ENCODE measurements at regions of chr11 and their contacts with region 1.

Region 1: DNA sequence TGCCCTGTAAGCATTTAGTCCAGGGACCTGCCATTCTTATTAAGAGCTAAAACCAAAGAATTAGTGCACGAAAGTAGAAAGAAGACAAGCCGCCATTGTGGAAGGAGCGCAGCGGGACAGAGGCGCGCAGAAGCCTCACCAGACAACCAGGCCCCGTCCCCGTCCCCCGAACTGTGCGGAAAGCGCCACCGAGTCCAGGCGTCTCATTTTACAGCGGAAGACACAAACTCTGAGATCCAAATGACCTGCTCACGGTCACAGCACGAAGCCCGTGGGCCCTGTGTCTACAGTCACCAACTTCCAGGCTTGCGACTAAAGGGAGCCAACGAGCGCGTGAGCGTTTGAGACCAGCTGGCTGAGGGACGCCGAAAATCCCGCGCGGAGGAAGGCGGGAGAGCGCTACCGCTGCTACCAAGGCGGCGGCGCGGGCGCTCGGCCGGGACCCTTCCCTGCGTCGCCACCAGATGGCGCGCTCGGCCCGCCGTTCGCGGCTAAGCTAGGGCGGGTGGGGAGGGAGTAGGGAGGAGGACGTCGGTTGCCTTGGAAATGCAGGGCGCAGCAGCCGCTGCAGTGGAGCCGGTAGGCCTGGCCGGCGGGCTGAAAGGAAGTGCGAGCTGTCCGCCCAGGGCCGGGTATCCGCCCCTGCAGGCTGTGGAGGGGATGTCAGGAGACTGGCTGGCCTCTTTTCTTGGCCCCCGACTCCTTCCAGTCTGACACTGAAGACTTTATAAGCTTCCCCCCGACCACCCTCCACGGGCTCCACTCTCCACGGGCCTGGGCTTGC is 434 bp upstream of the CCDC83 start:
- DNase-seq: peak; percentile 88
- H3K4me3 Mint-ChIP-seq: peak overlapping the region; percentile 72
- H3K27ac Mint-ChIP-seq: peak overlapping the region; percentile 74
- H3K4me1 Mint-ChIP-seq: peaks cover 8% of the 10 kb centered on the region
- H3K27me3 Mint-ChIP-seq: no peaks in the 10 kb centered on the region
- CTCF ChIP-seq: peak; percentile 66

Region 2: DNA sequence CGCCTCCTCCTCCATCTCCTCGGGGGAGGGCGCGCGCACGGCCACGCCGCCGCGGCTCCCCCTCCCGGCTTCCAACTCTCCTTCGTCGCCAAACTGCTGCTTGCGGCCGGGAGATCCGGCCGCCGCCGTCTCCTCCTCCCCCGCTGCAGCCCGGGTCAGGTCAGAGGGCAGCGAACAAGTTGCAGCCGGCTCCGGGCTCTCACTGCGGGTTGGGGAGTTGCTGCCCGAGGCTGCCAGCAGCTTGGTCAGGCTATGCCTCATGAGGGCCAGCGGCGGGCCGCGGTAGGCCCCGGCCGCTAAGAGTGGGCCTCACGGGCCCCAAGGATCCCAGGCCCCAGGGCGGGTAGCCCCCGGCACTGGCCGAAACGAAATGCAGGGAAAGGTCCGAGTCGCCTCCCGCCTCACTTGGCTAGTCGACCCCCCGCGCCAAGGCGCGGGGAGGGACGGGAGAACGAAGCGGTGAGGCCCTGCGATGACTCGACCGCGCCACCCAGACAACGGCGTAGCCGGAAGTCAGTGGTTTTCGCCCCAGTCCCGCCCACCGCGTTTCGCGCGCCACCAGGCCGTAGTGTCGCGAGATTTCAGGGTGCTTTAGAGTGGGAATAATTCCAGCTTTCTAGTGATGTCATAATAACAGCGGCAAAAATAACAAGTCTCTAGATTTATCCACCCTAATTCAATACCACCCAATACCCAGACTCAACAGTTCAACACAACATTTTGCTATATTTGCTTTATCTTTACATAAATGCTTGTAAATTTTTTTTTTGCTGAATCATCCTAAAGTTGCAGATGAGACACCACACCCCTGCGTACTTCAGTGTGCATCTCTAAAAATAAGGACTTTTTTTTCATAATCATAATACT is 189.9 kb before region 1 on chr11 and contains the start of gene CREBZF:
- CTCF ChIA-PET with region 1: no interaction called
- intact Hi-C with region 1: loop called (anchors 1 kb)
- DNase-seq: peak; percentile 91
- H3K4me3 Mint-ChIP-seq: peak within 1 kb of the TSS; percentile 87
- H3K27ac Mint-ChIP-seq: peak within 1 kb of the TSS; percentile 76
- H3K4me1 Mint-ChIP-seq: no peaks in the 10 kb centered on the region
- H3K27me3 Mint-ChIP-seq: no peaks in the 10 kb centered on the region
- CTCF ChIP-seq: no peak
- total RNA-seq, gene CREBZF: 31.0 and 31.2 TPM in 2 replicates

Region 3: DNA sequence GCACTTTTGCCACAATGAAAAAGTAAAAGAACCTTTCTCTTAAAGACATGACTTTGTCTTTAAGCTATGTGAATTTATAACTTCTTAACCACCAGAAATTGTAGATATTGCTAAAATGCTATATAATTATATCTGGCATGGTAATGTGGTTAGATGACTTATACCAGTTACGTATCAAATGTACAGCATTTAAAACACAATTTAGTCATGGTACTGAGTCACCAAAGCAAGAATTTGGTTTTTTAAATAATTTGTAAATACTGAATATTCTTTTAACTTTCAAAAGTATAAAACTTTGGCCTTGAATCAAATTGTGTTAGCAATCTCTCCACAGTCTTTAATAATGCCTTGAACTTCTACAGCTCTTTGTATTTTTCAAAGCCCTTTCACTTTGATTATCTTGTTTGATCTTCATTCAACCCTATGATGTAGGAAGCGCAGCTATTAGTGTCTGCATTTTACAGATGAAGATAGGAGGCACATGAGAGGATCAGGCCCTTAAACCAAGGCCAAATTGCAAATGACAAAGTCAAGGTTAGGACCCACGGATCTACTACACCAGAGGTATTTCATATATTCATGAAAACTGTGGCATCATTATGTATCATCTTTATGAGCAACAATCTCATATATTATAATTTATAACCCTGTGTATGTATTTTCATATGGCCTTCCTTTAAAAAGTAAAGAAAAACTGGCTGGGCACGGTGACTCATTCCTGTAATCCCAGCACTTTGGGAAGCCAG is 39.4 kb before region 1 on chr11:
- CTCF ChIA-PET with region 1: no interaction called
- intact Hi-C with region 1: no loop called
- DNase-seq: no peak
- H3K4me3 Mint-ChIP-seq: no peak overlapping the region
- H3K27ac Mint-ChIP-seq: no peak overlapping the region
- H3K4me1 Mint-ChIP-seq: peaks cover 9% of the 10 kb centered on the region
- H3K27me3 Mint-ChIP-seq: no peaks in the 10 kb centered on the region
- CTCF ChIP-seq: no peak

Region 4: GRCh38 chr11:85947431-85948272 is 92.9 kb after region 1 on chr11:
- CTCF ChIA-PET with region 1: interaction called, 3 read pairs
- intact Hi-C with region 1: loop called (anchors 5 kb)
- DNase-seq: peak; percentile 43
- H3K4me3 Mint-ChIP-seq: no peak overlapping the region
- H3K27ac Mint-ChIP-seq: peak overlapping the region; percentile 56
- H3K4me1 Mint-ChIP-seq: peaks cover 39% of the 10 kb centered on the region
- H3K27me3 Mint-ChIP-seq: no peaks in the 10 kb centered on the region
- CTCF ChIP-seq: no peak

Region 5: GRCh38 chr11:86041975-86042378 is 187.2 kb after region 1 on chr11:
- CTCF ChIA-PET with region 1: no interaction called
- intact Hi-C with region 1: no loop called
- DNase-seq: peak; percentile 71
- H3K4me3 Mint-ChIP-seq: no peak overlapping the region
- H3K27ac Mint-ChIP-seq: no peak overlapping the region
- H3K4me1 Mint-ChIP-seq: peaks cover 32% of the 10 kb centered on the region
- H3K27me3 Mint-ChIP-seq: no peaks in the 10 kb centered on the region
- CTCF ChIP-seq: peak; percentile 77

Region 6: DNA sequence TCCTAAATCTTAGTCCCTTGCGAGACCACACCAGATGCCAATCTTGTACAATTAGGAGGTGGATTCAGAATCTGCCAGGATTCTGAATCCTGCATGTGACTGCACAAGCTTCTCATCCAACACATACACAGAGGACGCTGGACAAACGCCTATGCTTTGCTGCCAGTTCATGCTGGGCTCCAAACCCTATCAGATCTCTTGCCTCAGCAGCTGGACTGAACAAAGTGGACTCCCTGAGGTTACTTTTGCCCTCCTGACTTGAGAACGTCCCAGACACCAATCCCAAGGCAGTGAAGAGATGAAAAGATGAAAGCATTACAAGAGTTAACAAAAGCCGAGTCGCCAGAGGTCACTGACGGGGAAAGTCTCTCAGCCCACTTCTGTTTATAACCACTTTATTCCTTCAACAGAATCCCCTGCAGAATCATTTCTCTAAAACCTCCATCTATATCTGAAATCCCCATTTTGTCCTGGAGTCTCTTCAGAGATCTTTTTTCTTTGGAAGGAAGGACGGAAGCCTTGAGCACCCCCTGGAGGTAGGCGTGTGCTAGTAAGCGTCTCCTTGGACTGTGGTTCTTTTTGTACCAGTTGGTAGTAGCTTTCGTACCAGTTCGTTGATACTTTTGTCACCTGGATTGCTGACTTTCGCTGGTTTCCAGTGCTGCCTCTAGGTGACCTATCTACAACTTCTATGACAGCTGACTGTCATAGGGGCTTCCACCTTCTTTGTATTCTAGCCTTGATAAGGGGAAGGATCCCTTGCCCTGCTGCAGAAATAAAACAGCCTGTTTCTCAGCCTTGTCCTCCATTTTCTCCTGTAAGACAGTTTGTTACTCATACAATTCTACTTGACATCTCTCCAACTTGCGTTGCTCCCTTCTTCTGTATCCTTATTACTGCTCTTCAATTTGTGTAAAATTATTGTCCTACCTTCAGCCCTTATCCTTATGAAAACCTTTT is 363.7 kb after region 1 on chr11:
- CTCF ChIA-PET with region 1: no interaction called
- intact Hi-C with region 1: loop called (anchors 10 kb)
- DNase-seq: peak; percentile 72
- H3K4me3 Mint-ChIP-seq: peak overlapping the region; percentile 7
- H3K27ac Mint-ChIP-seq: peak overlapping the region; percentile 9
- H3K4me1 Mint-ChIP-seq: peaks cover 22% of the 10 kb centered on the region
- H3K27me3 Mint-ChIP-seq: no peaks in the 10 kb centered on the region
- CTCF ChIP-seq: peak; percentile 53